Endothelial cell of umbilical vein (primary cell): ENCODE measurements at regions of chr15 and their contacts with region 1.

Region 1: GRCh38 chr15:44663409-44664308 is at the start of gene SPG11:
- DNase-seq: peak; percentile 99
- H3K4me3 ChIP-seq: peak within 1 kb of the TSS; percentile 76 to 95 (median 86)
- H3K27ac ChIP-seq: peak within 1 kb of the TSS; percentile 73
- H3K4me1 ChIP-seq: peaks cover 9% of the 10 kb centered on the region
- H3K27me3 ChIP-seq: peaks cover 0 to 1% of the 10 kb centered on the region in 2 experiments
- CTCF ChIP-seq: peak; percentile 86 to 92
- POLR2A ChIP-seq: peak; percentile 97
- total RNA-seq, gene SPG11: 44.7 and 53.5 TPM in 2 replicates

Region 2: GRCh38 chr15:44593042-44593736 is 70.5 kb before region 1 on chr15:
- CTCF ChIA-PET with region 1: interaction called, 9 read pairs
- POLR2A ChIA-PET with region 1: no interaction called
- dilution Hi-C with region 1: no loop called
- intact Hi-C with region 1: loop called (anchors 1 kb)
- DNase-seq: no peak
- H3K4me3 ChIP-seq: no peak overlapping the region
- H3K27ac ChIP-seq: no peak overlapping the region
- H3K4me1 ChIP-seq: peaks cover 10% of the 10 kb centered on the region
- H3K27me3 ChIP-seq: no peaks in the 10 kb centered on the region
- CTCF ChIP-seq: peak; percentile 39 to 47
- POLR2A ChIP-seq: no peak

Region 3: DNA sequence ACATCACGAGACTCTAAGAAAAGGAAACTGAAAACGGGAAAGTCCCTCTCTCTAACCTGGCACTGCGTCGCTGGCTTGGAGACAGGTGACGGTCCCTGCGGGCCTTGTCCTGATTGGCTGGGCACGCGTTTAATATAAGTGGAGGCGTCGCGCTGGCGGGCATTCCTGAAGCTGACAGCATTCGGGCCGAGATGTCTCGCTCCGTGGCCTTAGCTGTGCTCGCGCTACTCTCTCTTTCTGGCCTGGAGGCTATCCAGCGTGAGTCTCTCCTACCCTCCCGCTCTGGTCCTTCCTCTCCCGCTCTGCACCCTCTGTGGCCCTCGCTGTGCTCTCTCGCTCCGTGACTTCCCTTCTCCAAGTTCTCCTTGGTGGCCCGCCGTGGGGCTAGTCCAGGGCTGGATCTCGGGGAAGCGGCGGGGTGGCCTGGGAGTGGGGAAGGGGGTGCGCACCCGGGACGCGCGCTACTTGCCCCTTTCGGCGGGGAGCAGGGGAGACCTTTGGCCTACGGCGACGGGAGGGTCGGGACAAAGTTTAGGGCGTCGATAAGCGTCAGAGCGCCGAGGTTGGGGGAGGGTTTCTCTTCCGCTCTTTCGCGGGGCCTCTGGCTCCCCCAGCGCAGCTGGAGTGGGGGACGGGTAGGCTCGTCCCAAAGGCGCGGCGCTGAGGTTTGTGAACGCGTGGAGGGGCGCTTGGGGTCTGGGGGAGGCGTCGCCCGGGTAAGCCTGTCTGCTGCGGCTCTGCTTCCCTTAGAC is 47.9 kb after region 1 on chr15 and contains the start of gene B2M:
- CTCF ChIA-PET with region 1: interaction called, 42 read pairs
- POLR2A ChIA-PET with region 1: interaction called, 22 read pairs
- dilution Hi-C with region 1: no loop called
- intact Hi-C with region 1: loop called (anchors 1 kb)
- DNase-seq: peak; percentile 98
- H3K4me3 ChIP-seq: peak within 1 kb of the TSS; percentile 79 to 96 (median 87)
- H3K27ac ChIP-seq: peak within 1 kb of the TSS; percentile 92
- H3K4me1 ChIP-seq: peaks cover 4% of the 10 kb centered on the region
- H3K27me3 ChIP-seq: no peaks in the 10 kb centered on the region
- CTCF ChIP-seq: no peak
- POLR2A ChIP-seq: peak; percentile 100
- total RNA-seq, gene B2M: 725 and 985 TPM in 2 replicates

Region 4: GRCh38 chr15:44738340-44738984 is 74.8 kb after region 1 on chr15:
- CTCF ChIA-PET with region 1: interaction called, 83 read pairs
- POLR2A ChIA-PET with region 1: interaction called, 4 read pairs
- dilution Hi-C with region 1: no loop called
- intact Hi-C with region 1: loop called (anchors 1 kb)
- DNase-seq: peak; percentile 66
- H3K4me3 ChIP-seq: no peak overlapping the region
- H3K27ac ChIP-seq: no peak overlapping the region
- H3K4me1 ChIP-seq: peaks cover 2% of the 10 kb centered on the region
- H3K27me3 ChIP-seq: no peaks in the 10 kb centered on the region
- CTCF ChIP-seq: peak; percentile 40 to 45
- POLR2A ChIP-seq: no peak

Region 5: GRCh38 chr15:45037936-45038335 is 374.3 kb after region 1 on chr15:
- CTCF ChIA-PET with region 1: interaction called, 5 read pairs
- POLR2A ChIA-PET with region 1: no interaction called
- dilution Hi-C with region 1: no loop called
- intact Hi-C with region 1: loop called (anchors 1 kb)
- DNase-seq: no peak
- H3K4me3 ChIP-seq: no peak overlapping the region
- H3K27ac ChIP-seq: no peak overlapping the region
- H3K4me1 ChIP-seq: peaks cover 5% of the 10 kb centered on the region
- H3K27me3 ChIP-seq: no peaks in the 10 kb centered on the region
- CTCF ChIP-seq: no peak
- POLR2A ChIP-seq: no peak